PC-3 (cell line): ENCODE measurements at regions of chr6 and their contacts with region 1.

Region 1: DNA sequence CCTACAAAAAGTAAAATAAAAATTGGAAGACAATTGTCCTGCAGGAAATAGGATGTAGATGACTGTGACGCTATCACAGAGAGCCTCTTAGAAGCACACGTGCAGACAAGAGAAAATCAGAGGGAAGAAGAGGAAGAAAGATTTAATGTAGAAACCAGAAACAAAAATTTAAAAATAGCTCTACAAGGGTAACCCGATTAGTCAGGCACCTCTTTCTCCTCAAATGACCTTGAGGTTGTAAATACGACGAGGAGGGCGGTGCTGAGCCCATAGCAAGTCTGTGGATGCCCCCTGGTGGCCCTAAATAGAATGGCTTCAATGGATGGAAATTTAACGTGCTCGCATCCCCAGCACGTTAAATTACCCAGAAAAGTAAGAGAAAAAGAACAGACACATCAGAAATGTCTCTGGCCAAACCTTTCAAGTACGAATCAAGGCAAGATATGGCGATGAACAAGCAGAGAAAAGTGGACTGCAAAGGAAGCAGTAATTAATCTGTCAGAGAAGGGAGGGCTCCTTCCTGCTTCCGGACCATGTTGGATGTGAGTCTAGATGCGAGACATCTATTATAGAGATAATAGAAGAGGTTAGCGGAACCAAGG is 4.2 kb upstream of the PRPH2 start:
- DNase-seq: peak; percentile 77
- ATAC-seq: peak; percentile 88
- H3K4me3 ChIP-seq: peak overlapping the region; percentile 20; the same call in 1 of the 2 replicates
- H3K27ac ChIP-seq: no peak overlapping the region
- H3K4me1 ChIP-seq: no peaks in the 10 kb centered on the region
- H3K27me3 ChIP-seq: no peaks in the 10 kb centered on the region
- CTCF ChIP-seq: peak; percentile 95

Region 2: DNA sequence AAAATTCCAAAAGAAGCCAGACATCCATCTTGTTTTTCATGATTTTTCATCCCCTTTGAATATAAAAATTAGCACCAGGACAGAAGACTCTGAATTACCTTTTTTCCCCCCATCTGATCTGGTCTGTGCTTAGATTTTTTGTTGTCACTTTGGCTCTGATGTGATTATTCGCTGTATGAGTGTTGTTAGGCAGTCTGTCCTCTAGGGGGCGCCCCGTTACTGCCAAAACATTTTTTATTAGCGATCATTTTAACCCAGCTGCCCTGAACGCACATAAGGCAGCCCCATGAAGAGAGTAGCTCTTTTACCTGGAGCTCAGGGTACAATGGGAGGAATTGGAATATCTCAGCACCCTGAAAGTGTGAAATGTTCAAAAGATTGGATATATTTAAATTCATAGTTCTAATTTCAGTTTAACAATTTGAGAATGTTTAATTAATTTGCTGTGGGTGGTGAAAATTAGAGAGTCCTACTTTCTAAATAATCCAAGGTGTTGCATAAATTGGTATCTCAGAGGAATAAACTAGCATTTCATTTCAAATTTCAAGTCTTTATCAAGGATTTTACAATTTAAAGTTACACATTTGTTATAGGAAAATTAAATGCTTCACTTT is 64.9 kb before region 1 on chr6:
- CTCF ChIA-PET with region 1: interaction called, 13 read pairs
- POLR2A ChIA-PET with region 1: no interaction called
- intact Hi-C with region 1: loop called (anchors 1 kb)
- DNase-seq: peak; percentile 77
- ATAC-seq: peak; percentile 65
- H3K4me3 ChIP-seq: no peak overlapping the region
- H3K27ac ChIP-seq: no peak overlapping the region
- H3K4me1 ChIP-seq: no peaks in the 10 kb centered on the region
- H3K27me3 ChIP-seq: no peaks in the 10 kb centered on the region
- CTCF ChIP-seq: peak; percentile 95

Region 3: DNA sequence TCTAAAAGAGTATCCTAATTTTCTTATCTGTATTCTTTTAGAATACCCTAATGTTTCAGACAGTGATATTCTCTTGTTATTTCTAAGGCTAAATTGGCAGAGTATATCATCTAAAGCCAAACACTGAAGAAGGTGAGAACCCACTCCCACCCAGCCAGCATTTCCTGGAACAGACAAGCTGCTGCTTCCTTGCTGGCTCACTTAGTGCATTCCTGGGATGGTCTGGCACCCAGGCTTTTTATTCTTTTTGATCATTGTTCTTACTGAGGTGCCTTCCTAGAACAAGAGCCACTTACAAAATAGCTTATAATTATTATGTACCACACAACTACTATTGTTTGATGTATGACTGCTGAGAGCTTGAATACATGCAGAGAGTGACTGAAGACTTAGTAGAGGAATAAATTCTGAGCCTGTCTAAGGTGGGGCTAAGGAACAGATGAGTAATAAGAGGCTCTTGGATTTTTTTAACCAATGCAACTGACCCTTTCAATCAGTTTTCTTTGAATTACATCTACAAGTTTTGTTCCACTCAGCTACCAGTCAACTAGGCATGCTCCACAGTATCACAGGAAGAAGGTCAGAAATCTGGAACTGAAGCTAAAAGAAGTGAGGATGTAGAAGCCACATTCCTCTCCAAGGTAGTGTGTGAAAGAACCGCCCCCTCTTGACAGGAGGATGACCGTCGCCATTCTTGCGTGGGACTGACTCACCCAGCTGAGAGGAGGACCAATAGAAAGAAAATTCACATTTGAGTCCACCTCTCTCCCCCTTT is 34.3 kb before region 1 on chr6:
- CTCF ChIA-PET with region 1: interaction called, 4 read pairs
- POLR2A ChIA-PET with region 1: no interaction called
- intact Hi-C with region 1: loop called (anchors 2 kb)
- DNase-seq: peak; percentile 19
- ATAC-seq: no peak; the same call in 1 of the 2 replicates
- H3K4me3 ChIP-seq: no peak overlapping the region
- H3K27ac ChIP-seq: no peak overlapping the region
- H3K4me1 ChIP-seq: no peaks in the 10 kb centered on the region
- H3K27me3 ChIP-seq: no peaks in the 10 kb centered on the region
- CTCF ChIP-seq: no peak

Region 4: GRCh38 chr6:42879372-42880239 is 153.0 kb after region 1 on chr6 and contains the start of gene RPL7L1:
- CTCF ChIA-PET with region 1: no interaction called
- POLR2A ChIA-PET with region 1: interaction called, 4 read pairs
- intact Hi-C with region 1: loop called (anchors 2 kb)
- DNase-seq: peak; percentile 85
- ATAC-seq: peak; percentile 89
- H3K4me3 ChIP-seq: peak within 1 kb of the TSS; percentile 85
- H3K27ac ChIP-seq: peak within 1 kb of the TSS; percentile 76
- H3K4me1 ChIP-seq: peaks cover 4% of the 10 kb centered on the region; the same call in 1 of the 2 replicates
- H3K27me3 ChIP-seq: no peaks in the 10 kb centered on the region
- CTCF ChIP-seq: no peak
- total RNA-seq, gene RPL7L1: 87.6 and 99.5 TPM in 2 replicates

Region 5: GRCh38 chr6:43086022-43086658 is 359.6 kb after region 1 on chr6:
- CTCF ChIA-PET with region 1: no interaction called
- POLR2A ChIA-PET with region 1: no interaction called
- intact Hi-C with region 1: no loop called
- DNase-seq: no peak
- ATAC-seq: no peak
- H3K4me3 ChIP-seq: no peak overlapping the region
- H3K27ac ChIP-seq: no peak overlapping the region
- H3K4me1 ChIP-seq: peaks cover 14% of the 10 kb centered on the region
- H3K27me3 ChIP-seq: no peaks in the 10 kb centered on the region
- CTCF ChIP-seq: no peak